ENCODE measurements at regions of chr19 and their contacts with region 1.

Region 1: GRCh38 chr19:19643158-19644053 is at the start of gene GMIP:
- DNase-seq: peak; percentile 91
- H3K4me3 Mint-ChIP-seq: peak within 1 kb of the TSS; percentile 92
- H3K27ac Mint-ChIP-seq: peak within 1 kb of the TSS; percentile 98
- H3K4me1 Mint-ChIP-seq: peaks cover 12% of the 10 kb centered on the region
- H3K27me3 Mint-ChIP-seq: no peaks in the 10 kb centered on the region
- total RNA-seq, gene GMIP: 38.7 to 40.6 TPM

Region 2: GRCh38 chr19:19145684-19146608 is 497.5 kb before region 1 on chr19:
- CTCF ChIA-PET with region 1: no interaction called
- intact Hi-C with region 1: loop called (anchors 2 kb)
- DNase-seq: peak; percentile 92
- H3K4me3 Mint-ChIP-seq: no peak overlapping the region
- H3K27ac Mint-ChIP-seq: no peak overlapping the region
- H3K4me1 Mint-ChIP-seq: no peaks in the 10 kb centered on the region
- H3K27me3 Mint-ChIP-seq: no peaks in the 10 kb centered on the region

Region 3: DNA sequence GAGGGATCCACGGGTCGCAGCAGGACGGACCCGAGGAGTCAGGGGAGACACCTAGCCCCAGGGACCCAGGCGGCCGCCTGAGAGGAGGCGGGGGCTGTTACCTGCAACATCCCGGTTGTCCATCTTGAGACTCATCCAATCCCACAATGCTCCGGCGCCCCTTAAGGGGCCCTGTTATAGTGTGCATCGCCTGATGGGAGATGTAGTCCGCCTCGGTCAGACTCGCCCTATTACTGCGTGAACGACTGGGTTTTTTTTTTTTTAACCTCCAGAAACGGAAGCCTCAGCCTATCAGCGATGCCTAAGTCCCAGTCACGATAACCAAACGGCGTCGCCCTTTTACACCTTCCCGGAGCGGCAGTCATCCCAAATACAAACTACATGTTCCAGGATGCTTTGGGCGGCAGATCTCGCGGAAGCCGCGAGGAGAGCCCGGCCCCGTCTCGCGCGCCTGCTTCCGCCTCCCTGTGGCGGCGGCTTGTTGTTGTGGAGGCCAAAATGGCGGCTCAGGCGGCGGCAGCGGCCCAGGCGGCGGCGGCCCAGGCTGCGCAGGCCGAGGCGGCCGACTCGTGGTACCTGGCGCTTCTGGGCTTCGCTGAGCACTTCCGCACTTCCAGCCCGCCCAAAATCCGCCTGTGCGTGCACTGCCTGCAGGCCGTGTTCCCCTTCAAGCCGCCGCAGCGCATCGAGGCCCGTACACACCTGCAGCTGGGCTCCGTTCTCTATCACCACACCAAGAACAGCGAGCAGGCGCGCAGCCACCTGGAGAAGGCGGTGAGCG is 322.9 kb before region 1 on chr19 and contains the starts of genes MAU2 and SUGP1:
- CTCF ChIA-PET with region 1: no interaction called
- intact Hi-C with region 1: no loop called
- DNase-seq: peak; percentile 94
- H3K4me3 Mint-ChIP-seq: peak within 1 kb of the TSS; percentile 93
- H3K27ac Mint-ChIP-seq: peak within 1 kb of the TSS; percentile 99
- H3K4me1 Mint-ChIP-seq: peaks cover 47% of the 10 kb centered on the region
- H3K27me3 Mint-ChIP-seq: no peaks in the 10 kb centered on the region
- total RNA-seq, gene MAU2: 38.6 to 42.5 TPM
- total RNA-seq, gene SUGP1: 31.7 to 32.4 TPM

Region 4: GRCh38 chr19:19531951-19532805 is 111.2 kb before region 1 on chr19:
- CTCF ChIA-PET with region 1: interaction called, 46 read pairs
- intact Hi-C with region 1: loop called (anchors 1 kb)
- DNase-seq: peak; percentile 88
- H3K4me3 Mint-ChIP-seq: no peak overlapping the region
- H3K27ac Mint-ChIP-seq: no peak overlapping the region
- H3K4me1 Mint-ChIP-seq: peaks cover 12% of the 10 kb centered on the region
- H3K27me3 Mint-ChIP-seq: no peaks in the 10 kb centered on the region

Region 5: DNA sequence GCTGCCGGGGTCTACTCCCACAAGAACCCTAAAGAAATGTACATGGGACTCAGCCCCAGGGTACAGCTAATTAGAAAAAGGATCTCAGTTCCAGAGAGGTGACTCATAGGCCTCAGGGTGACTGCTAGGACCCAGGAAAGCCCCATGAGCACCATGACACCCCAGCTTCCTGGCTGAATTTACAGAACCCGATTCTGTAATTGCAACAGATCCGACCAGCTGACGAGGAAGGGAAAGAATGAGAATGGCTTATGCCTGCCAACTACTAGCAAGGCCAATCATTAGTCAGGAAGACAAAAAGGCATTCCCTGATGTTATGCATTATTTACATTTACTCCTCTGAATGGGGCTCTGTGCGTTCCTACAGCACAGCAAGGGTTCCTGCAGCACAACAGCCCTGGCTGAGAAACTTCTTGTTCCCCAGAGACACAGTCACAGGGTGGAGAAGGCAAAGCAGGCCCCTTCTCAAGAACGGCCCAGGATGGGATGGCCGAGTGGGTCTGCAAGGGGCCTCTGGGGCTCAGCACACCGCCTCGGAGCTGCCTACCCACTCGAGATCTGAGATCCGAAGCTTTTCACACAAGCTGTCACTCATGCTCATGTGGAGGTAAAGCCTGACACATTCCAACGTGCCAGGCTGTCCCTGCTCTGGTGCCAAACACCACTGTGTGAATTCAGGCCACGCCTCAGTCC is 52.1 kb before region 1 on chr19:
- CTCF ChIA-PET with region 1: interaction called, 3 read pairs
- intact Hi-C with region 1: loop called (anchors 1 kb)
- DNase-seq: peak; percentile 91
- H3K4me3 Mint-ChIP-seq: peak overlapping the region; percentile 47
- H3K27ac Mint-ChIP-seq: peak overlapping the region; percentile 93
- H3K4me1 Mint-ChIP-seq: peaks cover 71% of the 10 kb centered on the region
- H3K27me3 Mint-ChIP-seq: no peaks in the 10 kb centered on the region

Region 6: GRCh38 chr19:19606021-19606420 is 37.4 kb before region 1 on chr19:
- CTCF ChIA-PET with region 1: interaction called, 10 read pairs
- intact Hi-C with region 1: no loop called
- DNase-seq: peak; percentile 77
- H3K4me3 Mint-ChIP-seq: peak overlapping the region; percentile 19
- H3K27ac Mint-ChIP-seq: peak overlapping the region; percentile 89
- H3K4me1 Mint-ChIP-seq: peaks cover 67% of the 10 kb centered on the region
- H3K27me3 Mint-ChIP-seq: no peaks in the 10 kb centered on the region

Region 7: DNA sequence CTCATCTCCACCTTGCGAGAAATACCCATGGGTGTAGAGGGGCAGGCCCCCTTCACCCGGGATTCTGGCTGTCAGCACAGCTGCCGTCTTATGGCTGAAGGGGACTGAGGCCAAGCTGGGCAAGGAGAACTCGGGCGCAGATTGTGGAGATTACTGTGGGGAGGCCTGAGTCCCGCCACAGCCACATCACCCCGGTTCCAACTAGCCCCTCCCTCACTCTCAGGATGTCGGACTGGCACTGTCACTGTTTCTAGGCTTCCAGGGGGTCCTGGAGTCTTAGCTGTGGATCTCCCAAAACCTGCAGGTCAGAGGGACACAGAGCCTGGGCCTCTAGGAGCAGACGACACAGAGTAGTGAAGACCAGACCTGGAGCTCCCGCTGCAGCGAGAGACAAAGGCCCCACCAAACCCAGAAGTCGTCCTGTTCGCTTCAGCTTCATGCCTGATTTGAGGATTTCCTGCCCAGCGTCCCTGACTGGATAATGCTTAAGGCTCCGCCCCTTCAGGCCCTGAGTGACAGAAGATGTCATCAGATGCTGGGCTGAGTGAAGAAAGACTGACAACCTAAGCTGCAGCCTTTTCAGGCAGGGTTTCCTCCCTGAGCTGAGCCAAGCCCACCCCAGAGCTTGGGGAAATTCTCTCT is 313.1 kb after region 1 on chr19:
- CTCF ChIA-PET with region 1: interaction called, 5 read pairs
- intact Hi-C with region 1: loop called (anchors 1 kb)
- DNase-seq: peak; percentile 9
- H3K4me3 Mint-ChIP-seq: no peak overlapping the region
- H3K27ac Mint-ChIP-seq: no peak overlapping the region
- H3K4me1 Mint-ChIP-seq: no peaks in the 10 kb centered on the region
- H3K27me3 Mint-ChIP-seq: no peaks in the 10 kb centered on the region

Measured in activated naive CD4-positive, alpha-beta T cell treated with anti-CD3 and anti-CD28 coated beads for 36 hours (primary cell).